HAP-1 (cell line): ENCODE measurements at regions of chr1 and their contacts with region 1.

Region 1: GRCh38 chr1:12124693-12125421 is 41.9 kb upstream of the TNFRSF1B start:
- DNase-seq: peak; percentile 49 to 80
- H3K4me3 ChIP-seq: no peak overlapping the region
- H3K4me1 ChIP-seq: no peaks in the 10 kb centered on the region
- H3K27me3 ChIP-seq: no peaks in the 10 kb centered on the region

Region 2: GRCh38 chr1:12161662-12162458 is 37.0 kb after region 1 on chr1:
- in situ Hi-C with region 1: no loop called
- DNase-seq: no peak
- H3K4me3 ChIP-seq: no peak overlapping the region
- H3K4me1 ChIP-seq: no peaks in the 10 kb centered on the region
- H3K27me3 ChIP-seq: peaks cover 8% of the 10 kb centered on the region

Region 3: DNA sequence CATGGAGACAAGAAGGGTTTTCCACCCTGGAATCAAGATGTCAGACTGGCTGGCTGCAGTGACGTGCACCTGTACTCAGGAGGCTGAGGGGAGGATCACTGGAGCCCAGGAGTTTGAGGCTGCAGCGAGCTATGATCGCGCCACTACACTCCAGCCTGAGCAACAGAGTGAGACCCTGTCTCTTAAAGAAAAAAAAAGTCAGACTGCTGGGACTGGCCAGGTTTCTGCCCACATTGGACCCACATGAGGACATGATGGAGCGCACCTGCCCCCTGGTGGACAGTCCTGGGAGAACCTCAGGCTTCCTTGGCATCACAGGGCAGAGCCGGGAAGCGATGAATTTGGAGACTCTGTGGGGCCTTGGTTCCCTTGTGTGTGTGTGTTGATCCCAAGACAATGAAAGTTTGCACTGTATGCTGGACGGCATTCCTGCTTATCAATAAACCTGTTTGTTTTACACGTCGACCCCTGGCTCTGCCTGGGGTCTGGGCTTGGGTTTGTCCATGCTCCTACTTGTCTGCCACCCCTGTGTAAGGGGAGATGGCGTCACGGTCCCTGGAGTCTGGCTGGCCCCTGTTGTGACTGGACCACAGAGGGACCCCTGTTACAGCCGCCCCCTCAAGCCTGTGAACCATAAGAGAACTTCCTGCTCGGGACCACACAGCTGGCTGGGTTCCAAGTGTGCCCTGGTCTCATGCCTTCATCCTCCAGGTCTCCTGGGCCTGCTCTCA is 84.1 kb after region 1 on chr1:
- in situ Hi-C with region 1: loop called (anchors 5 kb)
- DNase-seq: peak; percentile 57 to 92
- H3K4me3 ChIP-seq: no peak overlapping the region
- H3K4me1 ChIP-seq: no peaks in the 10 kb centered on the region
- H3K27me3 ChIP-seq: no peaks in the 10 kb centered on the region

Region 4: GRCh38 chr1:12220890-12221289 is 96.0 kb after region 1 on chr1:
- in situ Hi-C with region 1: no loop called
- DNase-seq: no peak
- H3K4me3 ChIP-seq: no peak overlapping the region
- H3K4me1 ChIP-seq: no peaks in the 10 kb centered on the region
- H3K27me3 ChIP-seq: no peaks in the 10 kb centered on the region

Region 5: DNA sequence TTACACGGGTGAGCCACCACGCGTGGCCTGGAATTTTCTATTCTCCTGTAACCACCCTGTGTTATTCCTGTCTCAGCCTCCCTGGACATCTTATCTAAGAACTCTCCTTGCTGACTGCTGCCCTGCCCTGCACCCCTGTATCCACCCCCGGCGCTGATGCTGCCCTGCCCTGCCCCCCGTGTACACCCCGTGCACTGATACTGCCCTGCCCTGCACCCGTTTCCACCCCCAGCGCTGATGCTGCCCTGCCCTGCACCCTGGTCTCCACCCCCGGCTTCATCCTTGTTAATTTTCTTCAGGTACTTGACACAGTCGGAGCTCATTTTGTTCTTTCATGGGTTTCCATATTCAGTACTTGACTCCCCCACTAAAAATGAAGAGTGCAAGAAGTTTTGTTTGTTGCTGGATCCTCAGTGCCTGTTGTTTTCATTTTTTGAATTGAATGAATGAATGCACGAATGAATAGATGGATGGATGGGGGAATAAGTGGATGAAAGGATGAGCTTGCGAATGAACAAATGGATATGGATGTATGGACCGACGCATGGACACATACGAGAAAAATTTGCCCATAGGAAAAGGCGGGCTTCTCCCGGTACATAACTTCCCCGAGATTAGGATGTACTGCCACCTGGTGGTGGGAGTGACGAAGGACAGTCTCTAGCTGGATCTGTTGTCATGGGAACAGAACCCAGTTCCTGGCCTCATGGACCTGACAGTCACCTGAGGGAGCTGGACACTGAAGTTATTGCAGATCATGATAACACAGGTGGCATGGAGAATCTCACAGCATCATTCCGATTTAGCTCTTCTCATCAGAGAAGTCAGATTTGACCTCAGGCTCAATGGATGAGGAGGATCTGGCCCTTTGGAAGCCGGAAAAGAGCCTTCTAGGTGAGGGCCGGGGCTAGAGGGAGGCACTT is 533.9 kb after region 1 on chr1:
- in situ Hi-C with region 1: loop called (anchors 10 kb)
- DNase-seq: peak; percentile 66 to 88
- H3K4me3 ChIP-seq: no peak overlapping the region
- H3K4me1 ChIP-seq: no peaks in the 10 kb centered on the region
- H3K27me3 ChIP-seq: 0 out of 2 replicates have a peak, but pooled peaks cover 2% of the 10 kb centered on the region

Region 6: DNA sequence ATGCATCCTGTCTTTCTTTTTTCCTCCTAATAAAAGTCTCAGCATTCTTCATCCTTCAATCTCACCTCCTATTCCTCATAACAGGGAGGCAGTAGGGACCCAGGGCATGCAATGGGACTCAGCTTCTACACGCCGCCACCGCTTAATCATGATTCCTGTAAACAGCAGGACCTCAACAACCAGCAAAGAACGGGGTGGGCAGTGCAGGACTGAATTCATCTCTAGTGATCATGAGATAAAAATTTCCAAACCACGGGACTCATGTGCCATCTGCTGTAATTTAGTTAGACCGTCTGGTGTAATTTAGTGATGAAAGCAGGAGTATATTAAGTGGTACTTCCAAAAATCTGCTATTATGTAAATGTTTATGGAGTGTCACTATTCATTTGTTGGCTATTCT is 654.0 kb after region 1 on chr1:
- in situ Hi-C with region 1: loop called (anchors 25 kb)
- DNase-seq: no peak
- H3K4me3 ChIP-seq: no peak overlapping the region
- H3K4me1 ChIP-seq: no peaks in the 10 kb centered on the region
- H3K27me3 ChIP-seq: no peaks in the 10 kb centered on the region; the same call in 1 of the 2 replicates